MCF 10A (cell line): ENCODE measurements at regions of chr1 and their contacts with region 1.

Region 1: DNA sequence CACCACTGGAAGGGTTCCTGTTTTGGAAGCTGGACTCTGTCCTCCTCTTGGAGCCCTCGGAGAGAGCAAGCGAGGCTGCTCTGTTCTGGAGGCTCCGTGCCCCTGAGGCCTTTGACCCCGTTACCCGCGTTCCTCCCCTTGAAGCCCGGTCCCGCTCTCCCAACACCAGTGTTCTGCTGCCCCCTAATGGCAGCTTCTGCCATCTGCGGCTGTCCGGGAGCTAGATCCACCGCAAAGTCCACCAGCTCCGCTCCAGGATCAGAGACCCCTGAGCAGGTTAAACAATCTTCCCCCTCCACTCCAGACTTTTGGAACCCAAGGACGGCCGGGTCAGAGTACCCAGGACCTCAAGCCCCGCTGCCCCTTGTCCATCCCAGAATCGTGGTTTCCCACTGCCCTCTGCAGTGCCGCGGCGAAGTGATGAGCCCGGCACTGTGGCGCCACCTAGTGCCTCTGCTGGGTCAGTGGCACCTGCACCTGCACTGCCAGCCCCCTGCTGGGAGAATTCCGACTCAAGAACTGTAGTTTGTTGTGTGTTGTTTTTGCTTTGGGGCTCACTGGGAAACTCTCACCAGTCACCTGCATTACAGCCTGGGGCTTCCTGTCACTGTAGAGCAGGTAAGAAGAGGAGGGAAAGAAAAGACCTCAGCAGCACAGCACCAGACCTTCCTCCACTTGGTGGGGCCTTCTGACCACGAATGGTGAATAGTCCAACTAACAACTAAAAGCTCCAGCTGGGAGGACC is 63.5 kb upstream of the NFASC start:
- DNase-seq: peak; percentile 94
- H3K4me3 Mint-ChIP-seq: peak overlapping the region; percentile 69
- H3K27ac Mint-ChIP-seq: no peak overlapping the region
- H3K4me1 Mint-ChIP-seq: no peaks in the 10 kb centered on the region
- H3K27me3 Mint-ChIP-seq: peaks cover 25% of the 10 kb centered on the region
- CTCF ChIP-seq: peak; percentile 99

Region 2: GRCh38 chr1:204003529-204003928 is 803.6 kb before region 1 on chr1:
- CTCF ChIA-PET with region 1: no interaction called
- POLR2A ChIA-PET with region 1: no interaction called
- intact Hi-C with region 1: no loop called
- DNase-seq: no peak
- H3K4me3 Mint-ChIP-seq: no peak overlapping the region
- H3K27ac Mint-ChIP-seq: no peak overlapping the region
- H3K4me1 Mint-ChIP-seq: peaks cover 4% of the 10 kb centered on the region
- H3K27me3 Mint-ChIP-seq: no peaks in the 10 kb centered on the region
- CTCF ChIP-seq: no peak

Region 3: DNA sequence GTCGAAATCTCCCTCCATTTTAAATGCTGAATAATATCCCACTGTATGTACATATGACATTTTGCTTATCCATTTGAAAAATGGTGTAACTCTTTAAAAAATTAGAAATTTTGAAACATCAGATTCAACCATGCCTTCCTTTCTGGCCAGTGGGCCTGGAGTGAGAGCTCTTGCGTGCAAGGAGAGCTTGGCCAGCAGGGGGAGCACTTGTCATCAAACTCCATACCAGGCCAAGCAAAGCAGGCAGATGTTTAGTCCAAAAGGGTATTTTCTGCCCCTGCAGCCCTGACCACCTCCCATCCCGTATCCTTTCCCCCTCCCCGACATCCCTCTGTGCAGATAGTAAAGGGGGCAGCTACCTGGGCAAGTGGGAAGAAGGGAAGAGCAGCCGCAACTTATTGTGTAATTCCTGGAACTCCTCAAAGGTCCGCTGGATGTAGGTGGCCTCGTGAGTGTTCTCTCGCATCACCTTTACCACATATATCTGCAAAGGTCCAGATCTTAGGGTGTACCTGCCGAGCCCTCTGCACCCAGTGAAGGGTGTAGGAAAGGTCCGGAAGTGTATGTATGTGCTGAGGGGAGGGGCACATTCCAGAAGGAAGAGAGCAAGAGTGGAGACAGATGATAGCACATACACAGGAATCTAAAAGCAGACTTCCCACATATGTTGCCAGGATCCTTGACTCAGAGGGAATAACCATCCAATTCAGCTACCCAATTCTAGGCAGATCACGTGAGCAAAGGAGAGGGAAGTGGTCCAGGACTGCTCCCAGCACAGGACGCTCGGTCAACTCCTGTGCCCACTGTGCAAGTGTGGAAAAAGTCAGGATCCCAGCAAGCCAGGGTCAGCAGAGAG is 375.6 kb before region 1 on chr1:
- CTCF ChIA-PET with region 1: interaction called, 21 read pairs
- POLR2A ChIA-PET with region 1: interaction called, 6 read pairs
- intact Hi-C with region 1: loop called (anchors 1 kb)
- DNase-seq: peak; percentile 88
- H3K4me3 Mint-ChIP-seq: no peak overlapping the region
- H3K27ac Mint-ChIP-seq: no peak overlapping the region
- H3K4me1 Mint-ChIP-seq: peaks cover 39% of the 10 kb centered on the region
- H3K27me3 Mint-ChIP-seq: no peaks in the 10 kb centered on the region
- CTCF ChIP-seq: peak; percentile 99

Region 4: DNA sequence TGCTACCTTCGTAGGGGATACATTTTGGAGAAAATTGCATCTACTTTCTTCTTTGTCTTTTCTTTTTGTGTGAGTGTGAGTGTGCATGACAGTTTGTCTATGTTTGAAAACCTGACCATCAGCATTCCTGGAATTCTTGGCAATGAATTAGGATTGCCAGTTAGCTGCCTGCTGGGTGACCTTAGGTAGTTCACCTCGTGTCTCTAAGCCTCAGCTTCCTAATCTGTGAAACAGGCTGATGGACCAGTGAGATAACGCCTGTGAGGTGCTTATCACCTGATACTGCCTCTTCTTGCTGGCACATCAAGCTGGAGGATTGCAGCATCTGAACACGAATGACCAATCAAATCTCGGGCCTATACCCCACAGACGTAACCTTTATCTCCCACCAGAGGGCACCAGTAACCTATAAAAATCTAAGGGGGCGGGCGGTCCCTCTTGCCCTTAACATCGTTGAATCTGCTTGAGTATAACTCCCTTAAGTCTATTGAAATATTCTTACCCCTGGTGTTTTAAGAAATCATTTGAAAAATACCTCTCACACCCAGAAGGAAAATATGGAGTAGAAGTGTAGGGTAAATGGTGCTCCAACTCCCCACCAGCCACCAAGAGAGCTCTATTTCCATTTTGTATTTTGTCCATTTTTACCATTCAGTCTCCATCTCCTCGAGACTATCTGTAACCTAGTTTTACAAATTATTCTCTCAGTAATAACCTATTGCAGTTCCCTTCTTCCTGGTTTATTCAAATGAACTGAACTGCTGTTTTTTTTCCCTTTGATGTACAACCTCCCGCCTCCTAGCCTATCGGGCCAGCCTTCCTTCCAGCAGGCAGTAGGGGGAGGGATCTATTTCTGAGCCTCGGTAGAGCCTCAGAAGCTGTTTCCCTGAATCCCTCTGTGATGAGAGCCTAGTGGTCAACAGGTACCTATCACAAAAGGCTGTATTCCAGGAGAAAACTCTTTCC is 241.2 kb before region 1 on chr1:
- CTCF ChIA-PET with region 1: interaction called, 1,156 read pairs
- POLR2A ChIA-PET with region 1: interaction called, 26 read pairs
- intact Hi-C with region 1: loop called (anchors 1 kb)
- DNase-seq: peak; percentile 91
- H3K4me3 Mint-ChIP-seq: no peak overlapping the region
- H3K27ac Mint-ChIP-seq: no peak overlapping the region
- H3K4me1 Mint-ChIP-seq: peaks cover 9% of the 10 kb centered on the region
- H3K27me3 Mint-ChIP-seq: no peaks in the 10 kb centered on the region
- CTCF ChIP-seq: peak; percentile 95

Region 5: GRCh38 chr1:204678721-204679475 is 128.2 kb before region 1 on chr1:
- CTCF ChIA-PET with region 1: interaction called, 18 read pairs
- POLR2A ChIA-PET with region 1: no interaction called
- intact Hi-C with region 1: no loop called
- DNase-seq: no peak
- H3K4me3 Mint-ChIP-seq: no peak overlapping the region
- H3K27ac Mint-ChIP-seq: no peak overlapping the region
- H3K4me1 Mint-ChIP-seq: no peaks in the 10 kb centered on the region
- H3K27me3 Mint-ChIP-seq: peaks cover 45% of the 10 kb centered on the region
- CTCF ChIP-seq: no peak

Region 6: GRCh38 chr1:204751894-204752687 is 55.0 kb before region 1 on chr1:
- CTCF ChIA-PET with region 1: interaction called, 29 read pairs
- POLR2A ChIA-PET with region 1: interaction called, 3 read pairs
- intact Hi-C with region 1: no loop called
- DNase-seq: peak; percentile 83
- H3K4me3 Mint-ChIP-seq: no peak overlapping the region
- H3K27ac Mint-ChIP-seq: no peak overlapping the region
- H3K4me1 Mint-ChIP-seq: no peaks in the 10 kb centered on the region
- H3K27me3 Mint-ChIP-seq: peaks cover 41% of the 10 kb centered on the region
- CTCF ChIP-seq: peak; percentile 44

Region 7: DNA sequence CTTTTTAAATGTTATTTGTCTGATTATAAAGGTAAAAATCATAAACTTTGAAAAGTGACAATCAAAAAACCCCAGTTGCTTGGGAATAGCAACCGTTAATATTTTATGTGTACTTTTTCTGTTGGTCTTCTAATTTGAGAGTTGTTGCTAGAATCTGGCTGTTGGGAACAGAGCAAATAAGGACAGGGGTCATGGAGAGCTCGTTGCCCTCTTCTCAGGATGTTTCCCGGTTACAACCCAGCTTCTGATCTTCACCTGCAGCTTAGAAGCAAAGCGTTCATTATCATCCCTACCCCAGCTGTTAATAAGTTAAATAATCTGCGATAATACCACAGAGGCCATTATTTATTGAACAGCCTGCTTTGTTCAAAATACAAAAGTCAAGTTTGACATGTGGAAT is 41.5 kb after region 1 on chr1:
- CTCF ChIA-PET with region 1: interaction called, 12 read pairs
- POLR2A ChIA-PET with region 1: no interaction called
- intact Hi-C with region 1: no loop called
- DNase-seq: no peak
- H3K4me3 Mint-ChIP-seq: no peak overlapping the region
- H3K27ac Mint-ChIP-seq: no peak overlapping the region
- H3K4me1 Mint-ChIP-seq: no peaks in the 10 kb centered on the region
- H3K27me3 Mint-ChIP-seq: peaks cover 68% of the 10 kb centered on the region
- CTCF ChIP-seq: no peak

Region 8: GRCh38 chr1:205061665-205062069 is 254.6 kb after region 1 on chr1:
- CTCF ChIA-PET with region 1: interaction called, 38 read pairs
- POLR2A ChIA-PET with region 1: no interaction called
- intact Hi-C with region 1: no loop called
- DNase-seq: peak; percentile 85
- H3K4me3 Mint-ChIP-seq: no peak overlapping the region
- H3K27ac Mint-ChIP-seq: no peak overlapping the region
- H3K4me1 Mint-ChIP-seq: no peaks in the 10 kb centered on the region
- H3K27me3 Mint-ChIP-seq: peaks cover 21% of the 10 kb centered on the region
- CTCF ChIP-seq: peak; percentile 99